K562 (cell line): ENCODE measurements at regions of chr5 and their contacts with region 1.

Region 1: GRCh38 chr5:123423278-123424149 is at the start of gene CEP120:
- DNase-seq: peak; percentile 93 to 99 (median 95)
- ATAC-seq: peak; percentile 99
- H3K4me3 ChIP-seq: peak within 1 kb of the TSS; percentile 89
- H3K27ac ChIP-seq: peak within 1 kb of the TSS; percentile 75
- H3K4me1 ChIP-seq: peaks cover 4 to 6% of the 10 kb centered on the region in 2 experiments; a peak in 3 of 5 replicates
- H3K27me3 ChIP-seq: no peaks in the 10 kb centered on the region
- CTCF ChIP-seq: peak; percentile 84 to 97 (median 92)
- EP300 ChIP-seq: peak; percentile 27; the same call in 1 of the 2 replicates
- POLR2A ChIP-seq: peak; percentile 86
- RAD21 ChIP-seq: peak; percentile 62 to 69
- polyA plus RNA-seq, gene CEP120: 3.3 to 3.9 TPM

Region 2: DNA sequence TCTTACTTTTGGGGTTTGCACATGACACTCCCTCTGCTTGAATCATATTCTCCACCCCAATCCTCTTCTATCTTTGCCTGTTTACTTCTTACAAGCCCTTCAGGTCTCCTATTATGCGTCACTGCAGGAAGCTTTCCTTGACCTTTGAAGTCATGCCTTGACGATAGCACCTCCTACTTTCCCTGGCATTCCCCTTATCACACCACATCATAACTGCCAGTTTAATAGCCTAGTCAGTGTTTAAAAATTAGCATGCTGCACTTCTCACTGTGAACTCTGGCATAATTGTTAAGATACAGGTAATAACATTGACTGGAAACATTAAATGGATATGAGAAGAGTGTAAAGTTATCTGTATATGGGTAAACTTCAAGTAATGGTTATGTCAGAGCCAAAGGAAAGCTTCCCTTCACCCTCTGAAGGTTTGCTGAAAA is 36.8 kb after region 1 on chr5:
- CTCF ChIA-PET with region 1: no interaction called
- POLR2A ChIA-PET with region 1: no interaction called
- in situ Hi-C with region 1: no loop called
- intact Hi-C with region 1: loop called (anchors 2 kb)
- DNase-seq: peak in 3 of 4 experiments; percentile 20 to 72 (median 33)
- ATAC-seq: peak; percentile 84
- H3K4me3 ChIP-seq: no peak overlapping the region
- H3K27ac ChIP-seq: peak overlapping the region; percentile 35; the same call in 1 of the 3 replicates
- H3K4me1 ChIP-seq: peaks cover 0 to 10% of the 10 kb centered on the region in 2 experiments; a peak in 2 of 5 replicates
- H3K27me3 ChIP-seq: no peaks in the 10 kb centered on the region
- CTCF ChIP-seq: no peak
- EP300 ChIP-seq: peak; percentile 31; the same call in 1 of the 2 replicates
- POLR2A ChIP-seq: no peak
- RAD21 ChIP-seq: no peak

Region 3: DNA sequence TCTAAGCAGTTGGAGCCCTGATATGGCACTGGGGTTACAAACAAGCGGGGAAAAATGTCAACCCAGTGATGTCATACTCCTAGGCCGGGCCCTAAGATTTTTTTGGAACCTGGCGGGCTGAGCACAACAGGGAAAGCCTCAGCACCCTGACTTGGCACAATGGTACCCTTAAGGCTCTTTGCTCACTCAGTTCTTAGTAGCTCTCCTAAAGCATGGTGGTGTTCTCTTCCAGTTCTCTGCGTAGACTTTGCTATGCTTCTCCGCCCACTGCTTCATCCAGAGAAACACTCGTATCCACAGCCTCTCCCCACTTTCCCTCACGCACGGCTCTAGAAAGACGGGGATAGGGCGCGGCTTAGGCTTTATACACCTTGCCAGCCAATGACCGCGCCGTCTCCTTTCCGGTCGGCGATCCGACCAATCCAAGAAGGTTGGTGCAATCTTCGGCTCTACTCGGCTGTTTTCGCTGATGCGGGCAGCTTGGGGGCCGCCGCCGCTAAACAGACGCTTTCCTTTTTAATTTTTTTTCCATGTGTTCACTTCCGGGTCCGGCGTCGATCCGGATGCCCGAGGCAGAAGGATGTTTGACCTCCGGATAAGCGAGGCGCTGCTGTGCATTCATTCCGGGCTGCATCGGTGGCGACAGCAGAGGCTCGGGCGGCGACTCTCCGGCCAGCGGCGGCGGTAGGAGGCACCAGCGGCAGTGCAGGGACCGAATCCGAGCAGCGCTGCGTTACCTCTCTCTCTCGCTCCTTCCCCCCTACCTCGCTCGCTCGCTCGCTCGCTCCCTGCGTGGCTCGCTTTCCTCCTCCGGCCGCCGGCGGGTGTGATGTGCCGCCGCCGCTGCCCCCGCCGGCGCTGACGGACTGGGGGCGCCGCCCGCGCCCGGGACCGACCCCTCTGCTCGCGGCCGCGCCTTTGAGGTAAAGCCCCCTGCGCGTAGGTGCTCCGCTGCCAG is 88.4 kb after region 1 on chr5 and contains the start of gene CSNK1G3:
- CTCF ChIA-PET with region 1: no interaction called
- POLR2A ChIA-PET with region 1: interaction called, 7 read pairs
- in situ Hi-C with region 1: no loop called
- intact Hi-C with region 1: loop called (anchors 2 kb)
- DNase-seq: peak; percentile 89 to 96 (median 92)
- ATAC-seq: peak; percentile 98
- H3K4me3 ChIP-seq: peak within 1 kb of the TSS; percentile 81
- H3K27ac ChIP-seq: peak within 1 kb of the TSS; percentile 75
- H3K4me1 ChIP-seq: peaks cover 0 to 6% of the 10 kb centered on the region in 2 experiments; a peak in 3 of 5 replicates
- H3K27me3 ChIP-seq: no peaks in the 10 kb centered on the region
- CTCF ChIP-seq: peak in 2 of 3 experiments; percentile 3 to 13; a peak in 1 of 6 replicates
- EP300 ChIP-seq: no peak
- POLR2A ChIP-seq: peak; percentile 97
- RAD21 ChIP-seq: no peak
- polyA plus RNA-seq, gene CSNK1G3: 8.3 to 11.4 TPM

Region 4: GRCh38 chr5:123545506-123545905 is 122.0 kb after region 1 on chr5:
- CTCF ChIA-PET with region 1: interaction called, 4 read pairs
- POLR2A ChIA-PET with region 1: interaction called, 4 read pairs
- in situ Hi-C with region 1: no loop called
- intact Hi-C with region 1: loop called (anchors 2 kb)
- DNase-seq: peak; percentile 19 to 45 (median 24)
- ATAC-seq: peak; percentile 70; the same call in 2 of the 3 replicates
- H3K4me3 ChIP-seq: no peak overlapping the region
- H3K27ac ChIP-seq: no peak overlapping the region
- H3K4me1 ChIP-seq: 0 out of 5 replicates have a peak, but pooled peaks cover 0 to 2% of the 10 kb centered on the region in 2 experiments
- H3K27me3 ChIP-seq: no peaks in the 10 kb centered on the region
- CTCF ChIP-seq: peak; percentile 51 to 73 (median 70)
- EP300 ChIP-seq: no peak
- POLR2A ChIP-seq: no peak
- RAD21 ChIP-seq: peak; percentile 44 to 66